ENCODE measurements at regions of chr1 and their contacts with region 1.

Region 1: DNA sequence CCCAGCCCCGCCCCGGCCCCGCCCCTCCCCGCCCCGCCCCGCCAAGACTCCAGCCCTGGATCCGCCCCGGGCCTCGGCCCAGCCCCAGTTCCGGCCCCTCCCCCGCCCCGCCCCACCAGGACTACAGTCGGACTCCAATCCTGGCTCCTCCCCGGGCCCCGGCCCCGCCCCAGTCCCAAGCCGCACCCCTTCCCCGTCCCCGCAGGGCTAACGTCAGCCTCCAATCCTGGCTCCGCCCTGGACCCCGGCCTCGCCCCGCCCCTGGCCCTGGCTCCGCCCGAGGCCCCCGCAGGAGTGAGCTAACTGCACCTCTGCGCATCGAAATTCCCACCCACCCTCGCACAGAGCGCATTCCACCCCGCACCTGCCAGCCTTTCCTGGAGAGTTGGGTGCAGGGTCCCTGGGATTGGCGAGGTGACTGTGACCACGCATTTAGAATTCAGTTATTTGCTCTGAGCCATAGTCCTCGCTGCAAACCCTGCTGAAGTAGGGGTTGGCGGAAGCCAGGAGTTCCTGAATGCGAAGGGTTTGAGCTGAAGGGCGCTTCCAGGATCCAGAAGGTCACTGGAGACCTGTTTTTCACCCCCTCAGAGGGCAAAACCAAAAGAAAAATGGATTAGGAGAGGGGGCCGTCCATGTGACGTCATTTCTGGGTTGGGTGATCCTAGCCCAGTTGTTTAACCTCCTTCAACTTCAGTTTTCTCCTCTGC is 588 bp upstream of the IGSF8 start:
- DNase-seq: peak; percentile 99
- H3K4me3 Mint-ChIP-seq: peak overlapping the region; percentile 69
- H3K27ac Mint-ChIP-seq: peak overlapping the region; percentile 76
- H3K4me1 Mint-ChIP-seq: peaks cover 37% of the 10 kb centered on the region
- H3K27me3 Mint-ChIP-seq: no peaks in the 10 kb centered on the region

Region 2: GRCh38 chr1:159554696-159555095 is 544.3 kb before region 1 on chr1:
- CTCF ChIA-PET with region 1: no interaction called
- POLR2A ChIA-PET with region 1: no interaction called
- intact Hi-C with region 1: no loop called
- DNase-seq: no peak
- H3K4me3 Mint-ChIP-seq: no peak overlapping the region
- H3K27ac Mint-ChIP-seq: no peak overlapping the region
- H3K4me1 Mint-ChIP-seq: no peaks in the 10 kb centered on the region
- H3K27me3 Mint-ChIP-seq: peaks cover 2% of the 10 kb centered on the region

Region 3: GRCh38 chr1:159924981-159925712 is 173.9 kb before region 1 on chr1 and contains the start of gene TAGLN2:
- CTCF ChIA-PET with region 1: no interaction called
- POLR2A ChIA-PET with region 1: interaction called, 3 read pairs
- intact Hi-C with region 1: loop called (anchors 5 kb)
- DNase-seq: peak; percentile 93
- H3K4me3 Mint-ChIP-seq: peak within 1 kb of the TSS; percentile 93
- H3K27ac Mint-ChIP-seq: peak within 1 kb of the TSS; percentile 98
- H3K4me1 Mint-ChIP-seq: peaks cover 38% of the 10 kb centered on the region
- H3K27me3 Mint-ChIP-seq: no peaks in the 10 kb centered on the region
- total RNA-seq, gene TAGLN2: 597 to 607 TPM

Region 4: GRCh38 chr1:160046494-160047110 is 52.4 kb before region 1 on chr1:
- CTCF ChIA-PET with region 1: interaction called, 12 read pairs
- POLR2A ChIA-PET with region 1: no interaction called
- intact Hi-C with region 1: no loop called
- DNase-seq: peak; percentile 61
- H3K4me3 Mint-ChIP-seq: peak overlapping the region; percentile 50
- H3K27ac Mint-ChIP-seq: no peak overlapping the region
- H3K4me1 Mint-ChIP-seq: peaks cover 9% of the 10 kb centered on the region
- H3K27me3 Mint-ChIP-seq: peaks cover 15% of the 10 kb centered on the region

Region 5: GRCh38 chr1:160070243-160071163 is 28.5 kb before region 1 on chr1:
- CTCF ChIA-PET with region 1: no interaction called
- POLR2A ChIA-PET with region 1: no interaction called
- intact Hi-C with region 1: no loop called
- DNase-seq: peak; percentile 67
- H3K4me3 Mint-ChIP-seq: peak overlapping the region; percentile 58
- H3K27ac Mint-ChIP-seq: no peak overlapping the region
- H3K4me1 Mint-ChIP-seq: peaks cover 18% of the 10 kb centered on the region
- H3K27me3 Mint-ChIP-seq: peaks cover 38% of the 10 kb centered on the region

Region 6: DNA sequence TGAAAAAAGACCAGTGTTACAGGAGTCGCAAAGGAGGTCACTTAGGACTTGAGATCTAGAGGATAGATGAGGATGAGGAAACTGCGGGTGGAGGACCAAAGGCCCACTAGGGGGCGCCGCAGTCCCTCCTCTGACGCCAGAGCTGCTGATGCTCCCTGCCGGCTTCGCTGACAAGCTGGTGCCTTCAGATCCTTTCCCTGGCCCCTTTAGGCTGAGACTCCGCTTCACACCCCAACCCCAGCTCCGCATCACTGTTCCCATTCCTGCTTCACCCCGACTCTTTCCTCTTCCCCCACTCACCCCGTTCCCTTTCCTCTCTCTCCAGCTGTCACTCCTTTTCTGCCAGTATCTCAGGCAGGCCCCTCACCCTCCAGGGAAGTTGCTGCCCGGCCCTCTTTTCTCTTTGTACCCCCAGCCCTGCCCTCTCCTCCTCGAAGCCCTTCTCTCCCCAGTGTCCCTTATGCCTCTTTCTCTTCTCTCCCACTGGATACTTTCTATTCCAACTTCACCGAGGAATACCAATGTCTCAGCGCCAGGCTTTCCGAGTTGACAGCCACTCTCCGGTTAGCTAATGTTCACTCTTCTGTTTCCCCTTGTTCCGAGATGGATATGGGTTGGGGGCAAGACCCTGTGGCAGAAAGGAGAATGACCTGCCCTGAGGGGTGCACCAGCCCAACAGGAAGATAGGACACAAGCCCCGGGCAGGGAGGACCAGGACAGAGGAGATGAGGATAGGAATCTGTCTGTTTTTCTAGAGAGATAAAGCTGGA is 13.1 kb before region 1 on chr1:
- CTCF ChIA-PET with region 1: interaction called, 101 read pairs
- POLR2A ChIA-PET with region 1: interaction called, 3 read pairs
- intact Hi-C with region 1: loop called (anchors 1 kb)
- DNase-seq: peak; percentile 87
- H3K4me3 Mint-ChIP-seq: no peak overlapping the region
- H3K27ac Mint-ChIP-seq: no peak overlapping the region
- H3K4me1 Mint-ChIP-seq: peaks cover 13% of the 10 kb centered on the region
- H3K27me3 Mint-ChIP-seq: peaks cover 21% of the 10 kb centered on the region

Region 7: GRCh38 chr1:160193091-160193819 is 94.2 kb after region 1 on chr1:
- CTCF ChIA-PET with region 1: interaction called, 8 read pairs
- POLR2A ChIA-PET with region 1: no interaction called
- intact Hi-C with region 1: loop called (anchors 2 kb)
- DNase-seq: peak; percentile 86
- H3K4me3 Mint-ChIP-seq: no peak overlapping the region
- H3K27ac Mint-ChIP-seq: no peak overlapping the region
- H3K4me1 Mint-ChIP-seq: no peaks in the 10 kb centered on the region
- H3K27me3 Mint-ChIP-seq: no peaks in the 10 kb centered on the region

Region 8: DNA sequence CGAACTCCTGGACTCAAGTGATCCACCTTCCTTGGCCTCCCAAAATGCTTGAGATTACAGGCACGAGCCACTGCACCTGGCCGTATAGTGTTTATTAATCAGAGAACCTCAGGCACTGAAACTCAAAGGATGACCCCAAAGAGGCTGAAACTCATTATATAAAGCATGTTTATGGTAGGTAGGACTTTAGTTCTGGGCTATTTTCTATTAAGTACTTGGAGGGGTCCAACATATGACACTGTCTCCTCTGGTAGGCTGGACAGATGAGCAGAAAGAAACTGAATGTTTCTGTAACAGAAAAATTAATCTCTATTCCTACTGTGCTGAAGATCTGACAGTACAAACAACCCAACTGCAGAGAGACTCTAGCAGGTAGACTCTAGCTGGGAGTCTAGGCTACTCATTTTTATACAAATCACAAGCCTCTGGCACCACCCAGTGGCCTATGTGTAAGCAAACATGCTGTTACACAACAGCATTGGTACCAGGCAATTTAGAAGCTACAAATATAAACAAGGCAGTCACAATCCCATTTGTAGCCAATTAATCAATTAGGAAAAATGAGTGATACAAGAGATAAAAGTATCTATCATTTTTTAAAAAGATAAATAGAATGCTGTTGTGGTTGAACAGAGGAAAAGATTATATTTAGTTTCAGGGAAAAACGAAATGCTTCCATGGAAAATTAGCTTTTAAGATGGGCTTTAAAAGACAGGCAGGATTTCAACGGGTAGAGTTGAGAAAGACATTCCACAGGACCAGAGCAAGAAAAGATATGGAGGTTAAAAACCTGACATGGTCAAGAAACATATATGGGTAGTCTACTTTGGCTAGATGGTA is 152.9 kb after region 1 on chr1:
- CTCF ChIA-PET with region 1: interaction called, 53 read pairs
- POLR2A ChIA-PET with region 1: no interaction called
- intact Hi-C with region 1: loop called (anchors 1 kb)
- DNase-seq: peak; percentile 57
- H3K4me3 Mint-ChIP-seq: no peak overlapping the region
- H3K27ac Mint-ChIP-seq: peak overlapping the region; percentile 5
- H3K4me1 Mint-ChIP-seq: peaks cover 11% of the 10 kb centered on the region
- H3K27me3 Mint-ChIP-seq: no peaks in the 10 kb centered on the region

Region 9: DNA sequence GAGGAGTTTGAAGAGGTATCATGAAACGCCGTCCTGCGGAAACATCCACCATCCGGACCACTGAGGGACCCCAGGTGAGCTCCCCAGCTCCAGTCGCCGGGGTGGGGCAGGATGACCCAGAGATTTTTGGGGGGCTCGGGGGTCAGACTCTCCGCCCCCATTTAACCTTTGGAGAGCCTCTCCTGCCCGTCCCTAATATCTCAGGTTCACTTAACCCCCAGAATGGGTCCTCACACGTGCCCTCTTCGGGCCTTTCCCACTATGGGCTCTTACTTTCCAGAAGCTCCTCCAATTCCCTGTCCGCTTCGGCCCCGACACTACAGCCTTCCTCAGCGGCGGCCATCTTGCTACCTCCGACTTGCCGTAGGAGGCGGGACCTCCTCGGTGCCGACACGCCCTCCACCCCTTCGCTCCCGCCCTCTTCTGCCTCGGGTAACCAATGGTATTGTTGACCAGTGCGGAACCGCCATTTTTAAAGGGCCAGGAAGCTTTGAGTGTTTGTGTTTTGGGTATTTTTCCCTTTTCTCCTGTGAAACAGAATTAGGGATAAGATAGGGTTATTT is 185.9 kb after region 1 on chr1 and contains the start of gene PEX19:
- CTCF ChIA-PET with region 1: interaction called, 77 read pairs
- POLR2A ChIA-PET with region 1: no interaction called
- intact Hi-C with region 1: loop called (anchors 1 kb)
- DNase-seq: peak; percentile 97
- H3K4me3 Mint-ChIP-seq: peak within 1 kb of the TSS; percentile 96
- H3K27ac Mint-ChIP-seq: peak within 1 kb of the TSS; percentile 90
- H3K4me1 Mint-ChIP-seq: peaks cover 20% of the 10 kb centered on the region
- H3K27me3 Mint-ChIP-seq: no peaks in the 10 kb centered on the region
- total RNA-seq, gene PEX19: 50.0 to 61.1 TPM

Region 10: DNA sequence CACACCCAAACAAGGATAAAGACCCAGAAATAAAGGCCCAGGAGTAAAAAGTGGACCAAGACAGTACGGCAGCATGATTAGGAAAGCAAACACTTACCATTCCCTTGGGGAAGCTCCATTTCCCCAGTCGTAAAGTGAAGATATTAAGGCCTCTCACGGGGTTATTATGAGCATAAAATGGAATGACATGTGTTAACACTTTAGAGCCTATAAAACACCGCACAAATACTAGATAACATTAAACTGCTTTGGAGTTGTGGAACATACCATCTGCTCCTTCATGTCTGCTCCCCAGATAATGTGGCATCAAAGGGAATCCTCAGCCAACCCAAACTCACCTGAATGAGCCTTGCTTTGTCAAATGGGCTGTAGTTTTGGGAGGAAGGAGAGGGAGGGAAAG is 864.5 kb after region 1 on chr1:
- CTCF ChIA-PET with region 1: no interaction called
- POLR2A ChIA-PET with region 1: no interaction called
- intact Hi-C with region 1: no loop called
- DNase-seq: no peak
- H3K4me3 Mint-ChIP-seq: no peak overlapping the region
- H3K27ac Mint-ChIP-seq: no peak overlapping the region
- H3K4me1 Mint-ChIP-seq: no peaks in the 10 kb centered on the region
- H3K27me3 Mint-ChIP-seq: no peaks in the 10 kb centered on the region